Endothelial cell of umbilical vein (primary cell): ENCODE measurements at regions of chr13 and their contacts with region 1.

Region 1: DNA sequence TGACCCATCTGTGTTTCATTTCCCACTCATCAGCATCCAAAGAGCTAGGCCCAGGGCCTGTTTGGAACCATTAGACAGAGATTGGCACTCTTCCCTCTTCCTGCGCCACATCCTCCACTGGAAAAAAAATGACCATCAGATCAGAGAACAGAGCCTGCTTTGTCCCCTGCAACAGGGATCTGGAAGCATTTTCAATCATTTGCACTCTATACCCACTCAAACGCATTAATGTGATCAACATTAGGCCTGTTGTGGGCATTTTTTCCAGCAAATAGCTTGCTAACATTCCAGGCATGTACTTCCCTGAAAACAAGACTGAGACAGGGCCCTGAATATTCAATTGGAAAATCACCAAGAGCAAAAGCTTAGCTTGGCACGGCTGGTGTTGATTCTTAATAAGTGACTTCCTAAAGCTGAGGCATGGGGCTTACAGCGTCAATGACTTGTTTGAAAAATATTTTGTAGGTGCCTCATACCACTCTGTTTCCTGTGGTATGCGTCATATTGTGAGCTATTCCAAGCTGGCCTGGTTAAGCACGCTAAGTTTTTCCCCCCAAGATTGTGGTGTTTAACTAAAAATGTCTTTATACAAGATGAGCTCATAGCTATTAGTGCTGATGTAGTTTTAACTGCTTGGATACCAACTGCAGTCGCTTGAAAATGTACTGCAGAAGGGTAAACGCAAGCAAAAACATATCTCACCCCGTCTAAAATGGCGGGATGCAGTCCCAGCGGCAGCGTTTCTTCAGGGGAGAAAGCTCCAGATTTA is 404.4 kb downstream of the SPRY2 start:
- DNase-seq: peak; percentile 100
- H3K4me3 ChIP-seq: peak overlapping the region in 1 of 3 experiments; percentile 6
- H3K27ac ChIP-seq: peak overlapping the region; percentile 99
- H3K4me1 ChIP-seq: peaks cover 62% of the 10 kb centered on the region
- H3K27me3 ChIP-seq: no peaks in the 10 kb centered on the region
- CTCF ChIP-seq: no peak
- POLR2A ChIP-seq: no peak

Region 2: DNA sequence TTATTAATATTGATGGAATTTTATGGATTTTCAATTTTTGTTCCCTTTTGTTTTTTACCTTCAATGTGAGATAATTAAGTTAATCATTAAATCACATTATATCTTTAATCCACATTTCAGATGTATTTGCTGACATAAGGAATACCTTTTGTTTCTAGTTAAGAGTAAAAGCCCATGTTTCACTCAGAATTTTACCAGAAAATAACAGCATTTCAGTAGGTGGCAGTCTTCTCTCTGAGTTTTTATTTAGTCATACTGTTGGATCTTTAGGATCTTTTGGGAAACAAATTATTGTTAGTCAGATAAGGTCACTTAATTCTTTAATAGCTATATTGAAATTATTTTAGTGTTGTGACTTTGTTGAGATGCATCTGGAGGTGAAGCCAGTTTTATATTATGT is 387.6 kb before region 1 on chr13:
- CTCF ChIA-PET with region 1: no interaction called
- POLR2A ChIA-PET with region 1: no interaction called
- dilution Hi-C with region 1: no loop called
- intact Hi-C with region 1: no loop called
- DNase-seq: peak; percentile 50
- H3K4me3 ChIP-seq: no peak overlapping the region
- H3K27ac ChIP-seq: no peak overlapping the region
- H3K4me1 ChIP-seq: no peaks in the 10 kb centered on the region
- H3K27me3 ChIP-seq: no peaks in the 10 kb centered on the region
- CTCF ChIP-seq: no peak
- POLR2A ChIP-seq: no peak

Region 3: DNA sequence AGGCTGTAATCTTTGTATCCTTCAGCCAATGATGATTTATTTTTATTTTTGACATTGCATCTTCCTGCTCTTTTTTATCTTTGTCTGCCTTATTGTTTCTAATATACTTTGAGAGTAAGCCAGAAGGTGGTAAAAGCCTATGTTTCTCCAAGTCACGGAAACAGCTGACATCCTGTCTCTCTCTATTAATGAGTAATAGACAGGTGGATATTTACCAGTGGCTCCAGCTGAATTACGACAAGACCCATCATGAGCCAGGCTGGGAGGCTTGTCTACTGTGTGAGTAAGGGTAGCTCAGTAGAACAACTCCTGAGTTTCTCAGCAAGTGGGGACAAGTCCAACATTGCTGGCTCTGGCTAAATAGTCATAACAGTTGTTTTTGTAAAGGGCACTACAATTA is 289.0 kb before region 1 on chr13:
- CTCF ChIA-PET with region 1: interaction called, 3 read pairs
- POLR2A ChIA-PET with region 1: no interaction called
- dilution Hi-C with region 1: no loop called
- intact Hi-C with region 1: loop called (anchors 1 kb)
- DNase-seq: peak; percentile 94
- H3K4me3 ChIP-seq: no peak overlapping the region
- H3K27ac ChIP-seq: peak overlapping the region; percentile 64
- H3K4me1 ChIP-seq: peaks cover 10% of the 10 kb centered on the region
- H3K27me3 ChIP-seq: no peaks in the 10 kb centered on the region
- CTCF ChIP-seq: no peak
- POLR2A ChIP-seq: no peak

Region 4: DNA sequence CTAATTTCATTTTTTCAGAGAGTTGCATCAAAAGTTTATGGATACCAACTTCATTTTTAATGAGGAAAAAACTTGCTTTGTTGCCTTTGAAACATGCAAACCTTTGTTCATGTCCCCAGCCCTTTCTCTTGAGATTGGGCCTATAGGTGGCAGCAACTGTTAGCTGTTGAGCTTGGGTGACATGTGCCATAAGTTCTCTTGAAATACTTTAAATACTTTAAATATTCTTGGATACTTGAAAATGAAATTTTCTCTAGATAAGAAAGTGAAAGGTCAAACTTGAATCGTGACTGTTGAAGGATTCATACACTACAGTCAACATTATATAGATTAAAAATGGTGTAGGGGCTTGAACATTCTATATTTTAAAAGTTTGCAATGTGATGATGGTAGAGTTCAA is 160.7 kb before region 1 on chr13:
- CTCF ChIA-PET with region 1: interaction called, 20 read pairs
- POLR2A ChIA-PET with region 1: interaction called, 4 read pairs
- dilution Hi-C with region 1: no loop called
- intact Hi-C with region 1: loop called (anchors 1 kb)
- DNase-seq: peak; percentile 87
- H3K4me3 ChIP-seq: no peak overlapping the region
- H3K27ac ChIP-seq: no peak overlapping the region
- H3K4me1 ChIP-seq: peaks cover 4% of the 10 kb centered on the region
- H3K27me3 ChIP-seq: no peaks in the 10 kb centered on the region
- CTCF ChIP-seq: peak; percentile 65 to 67
- POLR2A ChIP-seq: no peak

Region 5: DNA sequence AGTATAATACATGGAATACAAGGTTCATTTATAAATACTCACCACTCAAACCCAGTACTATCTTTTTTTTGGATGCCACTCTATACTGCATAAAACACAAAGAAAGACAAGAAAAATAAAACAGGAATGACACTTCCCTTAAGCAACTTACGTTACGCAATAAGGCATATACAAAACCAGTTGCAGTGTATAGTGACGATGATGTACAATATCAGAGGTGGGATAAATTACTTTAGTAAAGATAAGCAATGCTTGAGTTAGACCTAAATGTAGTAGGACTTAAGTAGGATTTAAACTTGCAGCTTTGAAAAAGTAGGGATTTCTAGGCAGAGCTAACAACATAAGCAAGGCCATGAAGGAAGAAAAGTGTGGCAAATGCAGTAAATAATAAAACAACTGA is 29.5 kb after region 1 on chr13:
- CTCF ChIA-PET with region 1: no interaction called
- POLR2A ChIA-PET with region 1: no interaction called
- dilution Hi-C with region 1: no loop called
- intact Hi-C with region 1: no loop called
- DNase-seq: peak; percentile 5
- H3K4me3 ChIP-seq: no peak overlapping the region
- H3K27ac ChIP-seq: no peak overlapping the region
- H3K4me1 ChIP-seq: no peaks in the 10 kb centered on the region
- H3K27me3 ChIP-seq: no peaks in the 10 kb centered on the region
- CTCF ChIP-seq: no peak
- POLR2A ChIP-seq: no peak

Region 6: DNA sequence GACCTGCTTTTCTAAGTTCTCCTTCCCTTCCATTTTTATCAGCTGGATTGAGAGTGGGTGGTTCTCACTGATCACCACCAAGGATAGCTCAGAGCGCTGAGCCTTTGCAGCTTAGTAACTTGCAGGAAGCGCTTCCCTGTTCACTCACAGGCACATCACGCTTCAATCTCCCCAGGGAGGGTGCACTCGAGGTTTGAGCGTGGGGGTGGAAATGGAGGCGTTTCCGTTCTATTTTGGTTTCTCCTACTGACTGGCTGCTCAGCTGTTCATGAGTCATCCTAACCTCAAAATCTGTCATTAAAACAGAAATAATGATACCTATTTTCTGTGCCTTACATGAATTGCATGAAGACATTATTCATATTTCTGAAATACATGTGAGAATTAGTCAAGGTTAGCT is 112.2 kb after region 1 on chr13:
- CTCF ChIA-PET with region 1: interaction called, 6 read pairs
- POLR2A ChIA-PET with region 1: no interaction called
- dilution Hi-C with region 1: no loop called
- intact Hi-C with region 1: loop called (anchors 1 kb)
- DNase-seq: peak; percentile 91
- H3K4me3 ChIP-seq: no peak overlapping the region
- H3K27ac ChIP-seq: peak overlapping the region; percentile 36
- H3K4me1 ChIP-seq: peaks cover 26% of the 10 kb centered on the region
- H3K27me3 ChIP-seq: no peaks in the 10 kb centered on the region
- CTCF ChIP-seq: no peak
- POLR2A ChIP-seq: no peak

Region 7: GRCh38 chr13:80217614-80218456 is 281.3 kb after region 1 on chr13:
- CTCF ChIA-PET with region 1: interaction called, 3 read pairs
- POLR2A ChIA-PET with region 1: no interaction called
- dilution Hi-C with region 1: no loop called
- intact Hi-C with region 1: loop called (anchors 1 kb)
- DNase-seq: peak; percentile 82
- H3K4me3 ChIP-seq: no peak overlapping the region
- H3K27ac ChIP-seq: peak overlapping the region; percentile 85
- H3K4me1 ChIP-seq: peaks cover 15% of the 10 kb centered on the region
- H3K27me3 ChIP-seq: no peaks in the 10 kb centered on the region
- CTCF ChIP-seq: no peak
- POLR2A ChIP-seq: no peak

Region 8: DNA sequence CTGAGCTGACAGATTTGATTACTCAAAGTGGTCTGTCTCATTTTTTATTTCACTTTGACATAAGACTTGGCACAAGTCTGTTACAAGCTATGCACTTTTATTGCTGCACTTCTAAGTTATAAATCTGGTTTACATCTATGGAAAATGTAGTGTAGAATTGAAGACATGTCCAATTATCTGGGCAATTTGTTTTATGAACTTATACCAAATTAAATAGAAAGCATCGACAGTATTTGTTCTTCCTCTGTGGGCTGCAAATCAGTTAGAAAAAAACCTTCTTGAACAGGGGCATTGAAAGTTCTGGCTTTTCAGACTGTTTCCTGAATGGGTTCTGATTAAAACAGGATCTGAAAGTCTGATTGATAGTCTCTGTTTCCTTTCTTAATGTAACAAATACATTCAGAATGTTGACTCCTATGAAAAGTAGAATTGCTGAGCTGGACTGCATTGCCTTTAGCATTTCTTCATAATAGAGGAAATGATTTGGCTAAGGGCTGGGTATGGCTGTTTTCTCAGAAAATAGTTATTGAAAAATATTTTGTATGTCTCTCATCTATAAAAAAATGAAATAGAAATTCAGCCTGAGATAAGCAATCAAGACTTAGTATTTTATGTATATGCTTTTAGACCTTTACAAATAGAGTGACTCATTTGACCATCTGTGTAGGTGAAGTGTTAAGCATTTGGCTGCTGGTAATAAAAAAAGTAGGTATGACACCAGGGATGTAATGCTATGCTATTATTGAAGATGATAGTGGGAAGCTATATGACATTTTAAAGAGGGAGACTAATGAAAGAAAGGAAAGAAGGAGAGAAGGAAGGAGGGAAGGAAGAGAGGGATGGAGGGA is 615.3 kb after region 1 on chr13:
- CTCF ChIA-PET with region 1: no interaction called
- POLR2A ChIA-PET with region 1: no interaction called
- dilution Hi-C with region 1: no loop called
- intact Hi-C with region 1: loop called (anchors 5 kb)
- DNase-seq: peak; percentile 88
- H3K4me3 ChIP-seq: no peak overlapping the region
- H3K27ac ChIP-seq: no peak overlapping the region
- H3K4me1 ChIP-seq: peaks cover 46% of the 10 kb centered on the region
- H3K27me3 ChIP-seq: no peaks in the 10 kb centered on the region
- CTCF ChIP-seq: no peak
- POLR2A ChIP-seq: no peak

Region 9: GRCh38 chr13:80962855-80963254 is 1026.3 kb after region 1 on chr13:
- CTCF ChIA-PET with region 1: no interaction called
- POLR2A ChIA-PET with region 1: no interaction called
- dilution Hi-C with region 1: no loop called
- intact Hi-C with region 1: loop called (anchors 1 kb)
- DNase-seq: peak; percentile 32
- H3K4me3 ChIP-seq: no peak overlapping the region
- H3K27ac ChIP-seq: peak overlapping the region; percentile 70
- H3K4me1 ChIP-seq: peaks cover 15% of the 10 kb centered on the region
- H3K27me3 ChIP-seq: no peaks in the 10 kb centered on the region
- CTCF ChIP-seq: no peak
- POLR2A ChIP-seq: no peak